ENCODE measurements at regions of chr10 and their contacts with region 1.

Region 1: DNA sequence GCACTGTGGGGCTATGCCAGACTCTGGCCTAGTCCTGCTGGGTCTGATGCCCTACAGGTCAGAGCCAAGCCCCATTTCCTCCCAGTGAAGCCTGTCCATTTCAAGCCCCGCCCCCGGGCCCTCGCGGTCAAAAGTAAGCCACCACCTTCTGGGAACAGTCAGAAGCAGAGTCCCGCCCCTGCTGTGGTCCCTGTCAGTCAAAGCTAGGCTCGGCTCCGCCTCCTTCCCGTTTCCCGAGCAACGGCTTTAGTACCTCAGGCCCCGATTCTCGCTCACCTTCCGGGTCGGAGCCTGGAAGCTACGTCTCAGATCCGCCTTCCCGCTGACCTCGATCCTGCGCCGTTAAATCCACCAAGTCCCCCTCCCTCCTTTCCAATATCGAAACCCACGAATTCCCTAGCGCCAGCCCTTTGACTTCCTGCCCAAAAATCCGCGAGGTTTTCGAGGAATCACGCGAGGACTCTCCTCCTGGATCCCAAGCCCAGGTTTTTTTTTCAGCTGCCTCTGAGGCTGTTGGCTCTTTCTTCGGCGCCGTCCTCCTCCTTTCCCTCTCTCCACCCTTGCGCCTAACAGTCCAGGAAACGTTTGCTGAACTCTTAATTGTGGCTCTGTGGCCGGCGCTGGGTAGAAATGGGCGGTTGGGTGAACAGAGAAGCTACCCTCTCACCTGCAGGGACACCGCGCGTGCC is 11.8 kb downstream of the SFXN3 start:
- DNase-seq: peak; percentile 89
- H3K4me3 ChIP-seq: peak overlapping the region; percentile 69
- H3K27ac ChIP-seq: no peak overlapping the region
- H3K4me1 ChIP-seq: peaks cover 32% of the 10 kb centered on the region
- CTCF ChIP-seq: no peak

Region 2: DNA sequence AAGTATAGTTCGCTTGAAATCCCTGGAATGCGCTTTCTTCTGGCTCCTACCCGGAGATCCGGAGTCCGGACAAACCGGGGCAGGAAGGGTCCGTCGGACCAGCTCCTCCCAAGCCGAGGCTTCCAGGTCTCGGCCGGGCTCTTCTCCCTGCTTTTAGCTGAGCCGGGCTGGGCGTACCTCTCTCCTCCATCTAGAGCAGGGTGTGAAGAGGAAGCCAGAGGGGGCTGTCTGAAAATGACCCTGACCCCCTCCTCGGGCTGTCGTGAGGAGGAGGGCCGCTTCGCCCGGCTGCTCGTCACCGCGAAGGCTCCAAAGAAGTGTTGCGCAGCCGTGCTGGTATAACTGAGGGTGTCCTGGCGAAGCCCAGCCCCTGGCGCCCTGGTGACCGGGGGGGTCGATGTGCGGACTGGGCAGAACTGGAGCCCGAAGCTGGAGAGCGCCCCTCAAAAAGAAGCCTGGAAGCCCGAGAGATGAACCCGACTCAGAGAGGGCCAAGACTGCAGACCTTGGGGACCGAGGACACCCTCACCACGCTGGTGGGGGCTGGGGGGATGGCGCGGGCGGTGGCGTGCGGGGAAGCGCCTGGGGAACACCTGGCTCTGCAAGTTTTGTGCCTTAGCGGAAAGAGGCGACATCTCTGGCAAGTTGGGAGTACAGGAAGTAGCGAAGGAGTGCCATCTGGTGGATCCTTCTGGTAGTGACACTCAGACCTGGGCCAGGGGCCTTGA is 24.7 kb after region 1 on chr10:
- CTCF ChIA-PET with region 1: interaction called, 3 read pairs
- POLR2A ChIA-PET with region 1: interaction called, 3 read pairs
- intact Hi-C with region 1: loop called (anchors 1 kb)
- DNase-seq: peak; percentile 89
- H3K4me3 ChIP-seq: peak overlapping the region; percentile 71
- H3K27ac ChIP-seq: peak overlapping the region; percentile 25
- H3K4me1 ChIP-seq: peaks cover 74% of the 10 kb centered on the region
- CTCF ChIP-seq: peak; percentile 87

Region 3: GRCh38 chr10:101141616-101142532 is 99.1 kb after region 1 on chr10:
- CTCF ChIA-PET with region 1: interaction called, 6 read pairs
- POLR2A ChIA-PET with region 1: interaction called, 4 read pairs
- intact Hi-C with region 1: loop called (anchors 1 kb)
- DNase-seq: peak; percentile 85
- H3K4me3 ChIP-seq: no peak overlapping the region
- H3K27ac ChIP-seq: no peak overlapping the region
- H3K4me1 ChIP-seq: no peaks in the 10 kb centered on the region
- CTCF ChIP-seq: peak; percentile 96

Measured in OCI-LY7 (cell line).